Calu3 (cell line): ENCODE measurements at regions of chr20 and their contacts with region 1.

Region 1: GRCh38 chr20:34704177-34705007 is at the start of gene TP53INP2:
- DNase-seq: peak; percentile 91
- H3K4me3 Mint-ChIP-seq: peak within 1 kb of the TSS; percentile 90
- H3K27ac Mint-ChIP-seq: peak within 1 kb of the TSS; percentile 97
- H3K4me1 Mint-ChIP-seq: peaks cover 26% of the 10 kb centered on the region
- H3K27me3 Mint-ChIP-seq: peaks cover 30% of the 10 kb centered on the region
- CTCF ChIP-seq: no peak
- total RNA-seq, gene TP53INP2: 5.0 and 5.2 TPM in 2 replicates

Region 2: DNA sequence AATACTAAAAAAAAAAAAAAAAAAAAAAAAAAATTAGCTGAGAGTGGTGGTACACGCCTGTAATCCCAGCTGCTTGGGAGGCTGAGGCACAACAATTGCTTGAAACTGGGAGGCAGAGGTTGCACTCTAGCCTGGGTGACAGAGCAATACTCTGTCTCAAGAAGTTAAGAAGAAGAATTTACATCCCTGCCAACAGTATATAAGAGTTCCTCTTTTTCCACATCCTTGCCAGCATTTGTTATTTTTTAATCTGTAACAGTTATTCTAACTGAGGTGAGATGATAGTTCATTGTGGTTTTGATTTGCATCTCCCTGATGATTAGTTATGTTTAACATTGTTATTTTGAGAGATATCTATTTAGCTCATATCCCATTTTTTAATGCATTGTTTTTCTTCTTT is 208.5 kb before region 1 on chr20:
- CTCF ChIA-PET with region 1: no interaction called
- intact Hi-C with region 1: no loop called
- DNase-seq: no peak
- H3K4me3 Mint-ChIP-seq: no peak overlapping the region
- H3K27ac Mint-ChIP-seq: no peak overlapping the region
- H3K4me1 Mint-ChIP-seq: no peaks in the 10 kb centered on the region
- H3K27me3 Mint-ChIP-seq: no peaks in the 10 kb centered on the region
- CTCF ChIP-seq: no peak

Region 3: DNA sequence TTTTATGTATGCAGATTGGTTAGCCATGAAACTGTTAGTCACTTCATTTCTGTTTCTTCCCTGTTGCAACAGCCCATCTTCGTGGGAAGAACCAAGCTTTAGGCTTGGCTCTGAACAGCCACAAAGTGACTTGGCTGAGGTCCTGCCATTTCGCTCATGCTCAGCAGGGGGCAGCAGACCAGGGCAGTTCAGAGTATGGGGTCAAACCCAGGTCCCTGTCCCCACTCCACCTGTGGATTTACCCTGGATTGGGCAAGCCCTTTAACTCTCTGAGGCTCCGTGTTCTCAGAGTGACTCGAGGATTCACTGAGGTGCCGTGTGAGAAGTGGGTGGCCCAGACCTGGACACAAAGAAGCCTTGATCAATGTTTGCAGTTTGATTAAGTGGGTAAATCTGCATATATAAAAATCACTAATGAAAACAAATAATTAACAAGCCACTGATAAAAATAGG is 165.7 kb before region 1 on chr20:
- CTCF ChIA-PET with region 1: interaction called, 4 read pairs
- intact Hi-C with region 1: loop called (anchors 2 kb)
- DNase-seq: peak; percentile 74
- H3K4me3 Mint-ChIP-seq: no peak overlapping the region
- H3K27ac Mint-ChIP-seq: peak overlapping the region; percentile 27
- H3K4me1 Mint-ChIP-seq: peaks cover 6% of the 10 kb centered on the region
- H3K27me3 Mint-ChIP-seq: no peaks in the 10 kb centered on the region
- CTCF ChIP-seq: peak; percentile 92

Region 4: DNA sequence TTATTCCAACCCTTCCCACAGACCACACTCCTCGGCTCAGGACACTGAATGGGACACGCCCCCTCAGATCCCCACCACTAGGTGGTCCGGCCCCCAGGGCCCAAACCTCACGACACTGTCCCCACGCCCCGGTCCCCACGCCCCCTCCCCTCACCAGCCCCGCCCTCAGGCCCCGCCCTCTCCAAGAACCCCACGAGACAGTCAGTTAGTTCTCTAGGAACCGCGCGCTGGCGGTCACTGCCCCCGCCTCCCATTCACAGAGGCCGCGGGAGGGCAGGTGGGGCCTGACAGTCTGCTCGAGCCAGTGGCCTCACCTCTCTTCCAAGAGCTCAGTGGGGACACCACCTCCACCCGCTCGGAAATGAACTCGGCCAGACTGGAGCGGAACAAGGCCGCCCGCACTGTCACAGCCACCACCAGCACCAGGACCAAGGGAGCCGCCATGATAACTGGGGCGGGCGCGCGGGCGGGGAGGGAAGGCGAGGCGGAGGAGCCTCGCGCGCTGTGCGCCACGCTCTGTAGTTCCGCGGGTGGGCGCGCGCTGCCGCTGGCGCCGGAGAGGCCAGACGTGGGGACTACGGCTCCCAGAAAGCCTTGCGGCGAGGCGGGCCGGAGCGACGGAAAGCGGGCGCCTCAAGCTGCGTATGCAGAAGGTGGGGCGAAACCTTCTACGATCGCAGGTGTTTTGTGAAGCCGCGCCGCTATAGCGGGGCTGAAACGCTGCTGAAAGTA is 27.6 kb before region 1 on chr20 and contains the start of gene PIGU:
- CTCF ChIA-PET with region 1: interaction called, 10 read pairs
- intact Hi-C with region 1: loop called (anchors 2 kb)
- DNase-seq: peak; percentile 99
- H3K4me3 Mint-ChIP-seq: peak within 1 kb of the TSS; percentile 89
- H3K27ac Mint-ChIP-seq: peak within 1 kb of the TSS; percentile 71
- H3K4me1 Mint-ChIP-seq: peaks cover 27% of the 10 kb centered on the region
- H3K27me3 Mint-ChIP-seq: no peaks in the 10 kb centered on the region
- CTCF ChIP-seq: no peak
- total RNA-seq, gene PIGU: 42.8 and 44.6 TPM in 2 replicates

Region 5: GRCh38 chr20:35104685-35105295 is 400.4 kb after region 1 on chr20:
- CTCF ChIA-PET with region 1: no interaction called
- intact Hi-C with region 1: no loop called
- DNase-seq: no peak
- H3K4me3 Mint-ChIP-seq: no peak overlapping the region
- H3K27ac Mint-ChIP-seq: no peak overlapping the region
- H3K4me1 Mint-ChIP-seq: no peaks in the 10 kb centered on the region
- H3K27me3 Mint-ChIP-seq: no peaks in the 10 kb centered on the region
- CTCF ChIP-seq: no peak